ENCODE measurements at regions of chr7 and their contacts with region 1.

Region 1: DNA sequence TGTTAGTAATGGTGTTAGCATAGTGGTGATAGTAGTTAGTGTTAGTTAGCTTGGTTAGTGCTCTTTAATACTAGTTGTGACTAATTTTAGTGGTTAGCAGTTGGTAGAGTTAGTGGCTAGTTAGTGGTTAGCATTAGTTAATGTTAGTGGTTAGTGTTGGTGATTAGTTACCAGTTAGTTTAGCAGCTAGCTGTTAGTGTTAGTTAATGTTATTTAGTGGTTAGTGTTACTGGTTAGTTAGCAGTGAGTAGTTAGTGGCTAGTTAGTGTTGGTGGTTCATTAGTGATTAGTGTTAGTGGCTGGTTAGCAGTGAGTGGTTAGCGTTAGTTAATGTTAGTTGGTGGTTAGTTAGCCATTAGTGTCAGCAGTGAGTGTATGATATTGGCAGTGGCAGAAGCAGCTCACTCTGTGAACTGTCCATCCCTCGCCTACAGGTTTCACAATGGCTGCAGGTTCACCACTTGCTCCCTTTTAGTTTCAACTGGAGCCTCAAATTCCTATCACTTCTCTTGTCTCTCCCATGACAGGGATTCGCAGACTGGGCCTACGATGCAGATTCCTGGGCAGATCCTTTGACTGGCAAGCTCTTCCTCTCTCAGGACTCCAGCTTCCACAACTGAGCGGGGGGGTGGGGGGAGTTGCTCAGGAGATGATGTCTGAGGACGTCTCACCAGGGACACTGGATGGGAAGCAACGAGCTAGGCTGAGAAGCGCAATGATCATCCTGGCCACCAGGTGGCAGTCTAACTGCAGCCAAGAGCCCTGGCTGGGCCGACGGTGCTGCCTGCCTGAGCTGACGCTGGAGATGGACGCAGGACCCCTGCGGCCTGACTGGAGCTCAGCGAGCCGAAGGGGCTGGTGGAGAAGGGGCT is 19.5 kb downstream of the GHRHR start:
- DNase-seq: peak; percentile 97
- ATAC-seq: peak; percentile 62
- H3K4me3 Mint-ChIP-seq: peak overlapping the region; percentile 67
- H3K27ac Mint-ChIP-seq: no peak overlapping the region
- H3K4me1 Mint-ChIP-seq: peaks cover 53% of the 10 kb centered on the region
- H3K27me3 Mint-ChIP-seq: peaks cover 7% of the 10 kb centered on the region
- CTCF ChIP-seq: peak; percentile 90

Region 2: DNA sequence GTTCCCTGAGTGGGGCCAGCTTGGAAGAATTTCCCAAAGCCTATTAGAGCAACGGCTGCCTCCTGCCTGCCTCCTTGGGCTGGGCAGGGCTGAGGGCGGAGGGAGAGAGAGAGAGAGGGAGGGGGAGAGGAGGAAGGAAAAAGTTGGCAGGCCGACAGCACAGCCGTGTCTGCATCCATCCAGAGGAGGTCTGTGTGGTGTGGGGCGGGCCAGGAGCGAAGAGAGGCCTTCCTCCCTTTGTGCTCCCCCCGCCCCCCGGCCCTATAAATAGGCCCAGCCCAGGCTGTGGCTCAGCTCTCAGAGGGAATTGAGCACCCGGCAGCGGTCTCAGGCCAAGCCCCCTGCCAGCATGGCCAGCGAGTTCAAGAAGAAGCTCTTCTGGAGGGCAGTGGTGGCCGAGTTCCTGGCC is 71.7 kb before region 1 on chr7 and contains the start of gene AQP1:
- CTCF ChIA-PET with region 1: interaction called, 26 read pairs
- POLR2A ChIA-PET with region 1: no interaction called
- DNase-seq: no peak
- ATAC-seq: no peak
- H3K4me3 Mint-ChIP-seq: no peak within 1 kb of the TSS
- H3K27ac Mint-ChIP-seq: no peak within 1 kb of the TSS
- H3K4me1 Mint-ChIP-seq: peaks cover 14% of the 10 kb centered on the region
- H3K27me3 Mint-ChIP-seq: no peaks in the 10 kb centered on the region
- CTCF ChIP-seq: no peak
- total RNA-seq, gene AQP1: 0.81 to 1.4 TPM (median 1.1 TPM) in 3 replicates

Region 3: GRCh38 chr7:30956704-30957103 is 26.6 kb before region 1 on chr7:
- CTCF ChIA-PET with region 1: no interaction called
- POLR2A ChIA-PET with region 1: no interaction called
- DNase-seq: no peak
- ATAC-seq: no peak
- H3K4me3 Mint-ChIP-seq: no peak overlapping the region
- H3K27ac Mint-ChIP-seq: no peak overlapping the region
- H3K4me1 Mint-ChIP-seq: no peaks in the 10 kb centered on the region
- H3K27me3 Mint-ChIP-seq: peaks cover 14% of the 10 kb centered on the region
- CTCF ChIP-seq: no peak

Region 4: DNA sequence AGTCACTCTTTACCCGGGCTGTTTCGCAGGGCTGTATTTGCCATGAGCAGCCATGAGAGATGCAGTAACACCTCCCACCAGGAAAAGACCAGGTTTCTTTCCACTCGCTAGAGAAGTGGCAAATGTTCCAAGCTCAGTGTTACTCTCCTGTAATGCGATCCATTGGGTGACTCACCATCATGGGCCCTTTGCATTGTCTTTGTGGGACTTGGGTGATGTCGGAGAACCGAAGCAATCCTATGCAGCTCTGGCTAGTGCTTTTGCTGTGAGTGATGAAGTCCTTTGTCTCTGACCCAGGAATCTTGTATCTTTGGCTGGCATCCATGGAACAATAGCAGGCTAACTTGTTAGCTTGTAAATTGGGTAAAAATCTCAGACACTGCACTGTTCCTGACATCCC is 20.4 kb after region 1 on chr7:
- CTCF ChIA-PET with region 1: interaction called, 17 read pairs
- POLR2A ChIA-PET with region 1: interaction called, 4 read pairs
- DNase-seq: no peak
- ATAC-seq: 0 out of 2 replicates have a peak, but pooled peaks have one; percentile 30
- H3K4me3 Mint-ChIP-seq: no peak overlapping the region
- H3K27ac Mint-ChIP-seq: no peak overlapping the region
- H3K4me1 Mint-ChIP-seq: peaks cover 7% of the 10 kb centered on the region
- H3K27me3 Mint-ChIP-seq: no peaks in the 10 kb centered on the region
- CTCF ChIP-seq: no peak

Region 5: GRCh38 chr7:31027161-31027965 is 44.1 kb after region 1 on chr7:
- CTCF ChIA-PET with region 1: interaction called, 49 read pairs
- POLR2A ChIA-PET with region 1: no interaction called
- DNase-seq: peak; percentile 56
- ATAC-seq: peak; percentile 76
- H3K4me3 Mint-ChIP-seq: no peak overlapping the region
- H3K27ac Mint-ChIP-seq: no peak overlapping the region
- H3K4me1 Mint-ChIP-seq: peaks cover 30% of the 10 kb centered on the region
- H3K27me3 Mint-ChIP-seq: peaks cover 1% of the 10 kb centered on the region; the same call in 1 of the 2 replicates
- CTCF ChIP-seq: no peak

Region 6: GRCh38 chr7:31058122-31058521 is 74.8 kb after region 1 on chr7:
- CTCF ChIA-PET with region 1: interaction called, 223 read pairs
- POLR2A ChIA-PET with region 1: interaction called, 5 read pairs
- DNase-seq: no peak
- ATAC-seq: no peak
- H3K4me3 Mint-ChIP-seq: no peak overlapping the region
- H3K27ac Mint-ChIP-seq: no peak overlapping the region
- H3K4me1 Mint-ChIP-seq: peaks cover 34% of the 10 kb centered on the region
- H3K27me3 Mint-ChIP-seq: peaks cover 15% of the 10 kb centered on the region
- CTCF ChIP-seq: no peak

Region 7: GRCh38 chr7:31134246-31135188 is 151.2 kb after region 1 on chr7:
- CTCF ChIA-PET with region 1: interaction called, 882 read pairs
- POLR2A ChIA-PET with region 1: no interaction called
- DNase-seq: peak; percentile 80
- ATAC-seq: peak; percentile 99
- H3K4me3 Mint-ChIP-seq: peak overlapping the region; percentile 9
- H3K27ac Mint-ChIP-seq: no peak overlapping the region
- H3K4me1 Mint-ChIP-seq: peaks cover 5% of the 10 kb centered on the region
- H3K27me3 Mint-ChIP-seq: peaks cover 7% of the 10 kb centered on the region
- CTCF ChIP-seq: peak; percentile 77

Measured in WTC11 (cell line).